ENCODE measurements at regions of chr21 and their contacts with region 1.

Region 1: DNA sequence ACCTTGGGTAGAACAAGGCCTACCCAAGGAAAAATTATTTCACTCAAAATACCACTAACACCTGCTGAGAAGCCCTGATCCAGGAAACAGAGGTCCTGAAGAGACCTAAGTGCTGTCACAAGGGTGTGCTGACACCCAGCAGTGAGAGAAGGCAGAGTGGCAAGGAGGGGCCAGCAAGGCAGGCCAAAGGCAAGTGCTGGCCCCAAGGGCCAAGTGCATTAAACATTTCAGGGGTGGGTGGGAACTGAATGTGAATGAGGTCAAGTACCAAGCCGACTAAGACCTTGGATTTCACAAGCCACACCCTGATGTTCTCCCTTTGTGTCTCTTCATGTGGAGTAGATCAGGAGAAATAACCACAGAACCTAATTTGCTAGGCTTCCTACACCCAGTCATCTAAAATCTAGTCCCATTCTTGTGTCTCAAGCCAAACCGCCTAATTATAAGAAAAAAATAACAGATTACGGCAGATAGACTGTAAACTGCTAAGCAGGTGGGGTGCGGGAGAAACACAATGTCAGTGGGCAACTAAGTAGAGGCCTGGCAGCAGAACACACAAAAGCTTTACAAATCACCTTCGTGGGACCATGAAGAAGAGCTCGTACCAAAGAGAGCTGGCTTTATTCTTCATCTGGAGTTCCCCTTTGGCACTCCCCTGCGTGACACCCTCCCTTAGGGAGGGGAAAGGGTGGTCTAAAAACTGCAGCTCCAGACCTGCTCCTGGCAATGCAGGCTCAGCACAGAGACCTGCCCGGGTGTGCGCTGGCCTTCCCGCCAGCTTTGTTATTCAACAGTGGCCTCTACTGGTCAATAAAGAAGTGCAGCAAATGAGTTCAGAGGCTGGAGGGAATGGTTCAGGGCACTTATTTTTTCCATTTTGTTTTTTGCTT is 8.7 kb downstream of the UBE2G2 start:
- DNase-seq: peak; percentile 56
- ATAC-seq: peak; percentile 98
- H3K4me3 Mint-ChIP-seq: no peak overlapping the region
- H3K27ac Mint-ChIP-seq: peak overlapping the region; percentile 48
- H3K4me1 Mint-ChIP-seq: peaks cover 67% of the 10 kb centered on the region
- H3K27me3 Mint-ChIP-seq: no peaks in the 10 kb centered on the region
- CTCF ChIP-seq: peak; percentile 80

Region 2: GRCh38 chr21:44653656-44654575 is 139.0 kb before region 1 on chr21:
- CTCF ChIA-PET with region 1: no interaction called
- POLR2A ChIA-PET with region 1: no interaction called
- intact Hi-C with region 1: no loop called
- DNase-seq: peak; percentile 54
- ATAC-seq: no peak
- H3K4me3 Mint-ChIP-seq: no peak overlapping the region
- H3K27ac Mint-ChIP-seq: peak overlapping the region; percentile 58
- H3K4me1 Mint-ChIP-seq: peaks cover 49% of the 10 kb centered on the region
- H3K27me3 Mint-ChIP-seq: no peaks in the 10 kb centered on the region
- CTCF ChIP-seq: no peak

Region 3: GRCh38 chr21:44780767-44781459 is 12.0 kb before region 1 on chr21:
- CTCF ChIA-PET with region 1: interaction called, 35 read pairs
- POLR2A ChIA-PET with region 1: no interaction called
- intact Hi-C with region 1: no loop called
- DNase-seq: no peak
- ATAC-seq: no peak
- H3K4me3 Mint-ChIP-seq: no peak overlapping the region
- H3K27ac Mint-ChIP-seq: no peak overlapping the region
- H3K4me1 Mint-ChIP-seq: peaks cover 33% of the 10 kb centered on the region
- H3K27me3 Mint-ChIP-seq: no peaks in the 10 kb centered on the region
- CTCF ChIP-seq: no peak

Region 4: DNA sequence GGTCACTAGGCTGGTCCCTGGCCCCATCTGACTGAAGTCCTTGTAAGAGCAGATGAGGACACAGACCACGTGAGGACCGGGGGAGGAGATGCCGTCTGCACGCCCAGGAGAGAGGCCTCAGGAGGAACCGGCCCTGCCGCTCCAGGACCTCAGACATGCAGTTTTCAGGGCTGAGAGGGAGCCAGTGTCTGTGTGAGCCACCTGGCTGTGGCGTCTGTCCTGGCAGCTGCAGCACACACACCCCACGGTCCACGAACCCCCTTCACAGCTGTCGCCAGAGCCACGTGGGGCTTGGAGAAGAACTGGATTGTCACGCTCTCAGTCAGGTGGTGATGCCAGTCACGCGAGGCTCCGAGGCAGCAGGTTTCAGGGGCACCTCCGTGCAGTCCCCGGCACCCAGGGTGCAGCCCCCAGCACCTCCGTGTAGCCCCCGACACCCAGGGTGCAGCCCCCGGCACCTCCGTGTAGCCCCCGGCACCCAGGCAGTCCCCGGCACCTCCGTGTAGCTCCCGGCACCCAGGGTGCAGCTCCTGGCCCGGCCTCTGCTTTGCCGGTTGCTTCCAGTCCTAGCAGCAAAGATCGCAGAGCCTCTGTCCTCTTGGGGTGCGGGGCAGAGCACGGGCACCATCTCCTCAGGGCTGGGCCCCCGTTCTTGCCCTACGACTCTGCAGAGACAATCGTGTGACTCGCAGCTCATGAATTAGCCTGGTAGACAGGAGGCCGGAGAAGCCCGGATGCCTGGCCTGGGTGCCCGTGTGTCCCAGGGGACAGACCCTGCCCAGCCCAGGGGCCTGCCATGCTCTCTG is 43.9 kb after region 1 on chr21:
- CTCF ChIA-PET with region 1: no interaction called
- POLR2A ChIA-PET with region 1: no interaction called
- intact Hi-C with region 1: no loop called
- DNase-seq: no peak
- ATAC-seq: no peak
- H3K4me3 Mint-ChIP-seq: no peak overlapping the region
- H3K27ac Mint-ChIP-seq: no peak overlapping the region
- H3K4me1 Mint-ChIP-seq: no peaks in the 10 kb centered on the region
- H3K27me3 Mint-ChIP-seq: no peaks in the 10 kb centered on the region
- CTCF ChIP-seq: no peak

Region 5: DNA sequence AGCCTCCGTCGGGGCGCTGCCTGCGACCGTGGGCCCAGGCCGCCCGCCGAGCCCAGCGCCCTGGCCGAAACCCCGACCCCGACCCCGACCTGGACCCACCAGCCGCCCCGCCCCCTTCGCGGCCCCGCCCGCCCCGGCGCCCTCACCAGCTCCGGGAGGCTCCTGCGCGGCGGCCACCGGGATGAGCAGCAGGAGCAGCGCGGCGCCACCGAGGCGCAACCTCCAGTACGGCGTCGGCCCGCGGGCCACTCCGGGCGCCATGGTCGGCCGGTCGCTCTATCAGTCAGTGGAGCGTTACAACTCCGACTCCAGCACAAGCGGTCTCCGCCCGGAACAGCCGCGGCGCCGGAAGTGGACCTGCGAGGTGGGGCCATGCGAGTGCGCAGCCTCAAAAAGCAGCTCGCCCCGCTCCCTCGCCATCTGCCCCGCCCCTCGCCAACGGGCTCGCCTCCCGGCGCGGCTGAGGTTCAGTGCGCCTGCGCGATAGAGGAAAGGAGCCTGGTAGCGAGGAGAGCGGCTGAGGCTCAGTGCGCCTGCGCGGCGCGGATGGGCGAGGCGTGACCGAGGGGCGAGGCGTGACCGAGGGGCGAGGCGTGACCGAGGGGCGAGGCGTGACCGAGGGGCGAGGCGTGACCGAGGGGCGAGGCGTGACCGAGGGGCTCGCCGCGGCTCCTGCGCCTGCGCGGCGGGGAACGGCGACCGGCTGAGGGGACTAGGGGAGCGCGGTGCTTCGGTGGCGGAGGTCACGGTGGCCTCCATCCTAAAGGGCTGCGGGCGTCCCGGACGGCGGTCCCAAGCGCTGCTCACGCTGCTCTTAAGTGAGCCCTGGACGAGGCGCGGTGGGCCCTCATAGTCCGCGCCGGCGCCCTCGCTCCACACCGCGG is 80.7 kb after region 1 on chr21 and contains the start of gene PTTG1IP:
- CTCF ChIA-PET with region 1: interaction called, 10 read pairs
- POLR2A ChIA-PET with region 1: no interaction called
- intact Hi-C with region 1: no loop called
- DNase-seq: peak; percentile 99
- ATAC-seq: peak; percentile 89
- H3K4me3 Mint-ChIP-seq: peak within 1 kb of the TSS; percentile 84
- H3K27ac Mint-ChIP-seq: peak within 1 kb of the TSS; percentile 83
- H3K4me1 Mint-ChIP-seq: peaks cover 40% of the 10 kb centered on the region
- H3K27me3 Mint-ChIP-seq: no peaks in the 10 kb centered on the region
- CTCF ChIP-seq: no peak
- total RNA-seq, gene PTTG1IP: 60.7 to 61.8 TPM

Region 6: DNA sequence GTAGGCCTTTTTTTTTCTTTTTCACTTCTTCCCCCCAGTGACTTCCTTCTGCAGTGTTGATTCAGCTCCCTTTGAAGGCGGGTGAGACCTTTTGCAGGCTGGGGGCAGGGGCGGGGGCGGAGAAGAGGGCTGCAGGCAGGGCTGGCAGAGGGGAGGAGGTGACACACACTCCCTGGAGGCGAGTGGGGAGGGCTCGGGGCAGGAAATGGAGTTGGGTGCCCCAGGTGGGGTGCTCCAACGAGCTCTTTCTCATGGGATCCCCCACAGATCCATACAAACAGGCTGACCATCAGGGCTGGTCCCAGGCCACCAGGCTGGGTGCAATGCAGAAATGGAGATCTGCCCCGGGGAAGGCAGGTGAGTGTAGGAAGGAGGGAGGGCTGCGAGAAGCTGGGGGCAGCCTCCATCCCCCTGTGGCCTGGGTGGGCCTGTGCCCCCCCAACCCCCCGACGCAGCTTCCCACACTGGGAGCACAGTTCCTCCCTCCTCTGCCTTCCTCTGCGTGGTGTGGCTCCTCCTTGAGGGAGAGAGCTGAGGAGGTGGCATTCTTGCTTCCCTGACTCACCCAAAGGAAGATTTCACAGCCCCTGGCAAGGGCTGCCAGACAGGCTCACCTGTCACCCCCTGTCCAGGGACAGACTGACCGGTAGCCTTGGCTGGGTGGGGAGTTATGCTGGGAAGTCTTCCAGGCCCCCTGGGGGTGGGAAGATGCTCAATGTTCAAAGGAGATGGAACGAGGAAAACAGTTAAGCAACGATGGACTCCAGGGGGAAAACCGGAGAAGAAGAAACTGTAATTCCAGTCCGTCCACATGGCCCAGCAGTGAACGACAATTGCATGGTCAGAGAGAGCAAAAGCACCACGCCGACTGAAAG is 134.9 kb after region 1 on chr21:
- CTCF ChIA-PET with region 1: interaction called, 10 read pairs
- POLR2A ChIA-PET with region 1: no interaction called
- intact Hi-C with region 1: no loop called
- DNase-seq: peak; percentile 98
- ATAC-seq: peak; percentile 75
- H3K4me3 Mint-ChIP-seq: peak overlapping the region; percentile 78
- H3K27ac Mint-ChIP-seq: peak overlapping the region; percentile 96
- H3K4me1 Mint-ChIP-seq: peaks cover 77% of the 10 kb centered on the region
- H3K27me3 Mint-ChIP-seq: no peaks in the 10 kb centered on the region
- CTCF ChIP-seq: no peak

Region 7: DNA sequence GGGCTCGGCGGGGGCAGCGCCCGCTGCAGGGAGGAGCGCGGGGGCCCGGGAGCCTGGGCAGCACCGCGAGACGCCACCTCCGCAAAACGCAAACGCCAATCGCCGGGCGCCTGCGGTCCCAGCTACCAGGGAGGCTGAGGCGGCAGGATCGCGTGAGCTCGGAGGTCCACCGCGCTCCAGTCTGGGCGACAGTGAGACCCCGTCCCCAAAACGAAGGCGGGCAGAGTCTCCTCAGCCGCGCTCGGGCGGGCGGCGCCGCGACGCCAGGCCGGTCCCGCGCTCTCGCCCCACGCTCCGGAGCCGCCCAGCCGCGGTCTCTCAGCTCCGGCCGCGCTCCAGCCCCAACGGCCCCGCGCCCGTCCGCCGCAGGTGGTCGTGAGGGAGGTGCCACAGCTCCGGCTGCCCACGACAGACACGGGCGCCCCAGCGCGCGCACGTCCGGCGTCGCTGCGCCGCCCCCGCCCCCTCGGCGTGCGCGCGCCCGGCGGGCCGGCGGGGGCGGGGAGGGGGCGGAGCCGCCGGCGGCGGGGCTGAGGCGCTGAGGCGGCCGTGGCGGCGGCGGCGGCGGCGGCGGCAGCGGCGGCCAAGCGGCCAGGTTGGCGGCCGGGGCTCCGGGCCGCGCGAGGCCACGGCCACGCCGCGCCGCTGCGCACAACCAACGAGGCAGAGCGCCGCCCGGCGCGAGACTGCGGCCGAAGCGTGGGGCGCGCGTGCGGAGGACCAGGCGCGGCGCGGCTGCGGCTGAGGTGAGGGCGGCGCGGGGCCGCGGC is 281.3 kb after region 1 on chr21 and contains the start of gene ADARB1:
- CTCF ChIA-PET with region 1: no interaction called
- POLR2A ChIA-PET with region 1: no interaction called
- intact Hi-C with region 1: no loop called
- DNase-seq: peak; percentile 56
- ATAC-seq: peak; percentile 40
- H3K4me3 Mint-ChIP-seq: peak within 1 kb of the TSS; percentile 87
- H3K27ac Mint-ChIP-seq: peak within 1 kb of the TSS; percentile 87
- H3K4me1 Mint-ChIP-seq: peaks cover 39% of the 10 kb centered on the region
- H3K27me3 Mint-ChIP-seq: no peaks in the 10 kb centered on the region
- CTCF ChIP-seq: no peak
- total RNA-seq, gene ADARB1: 36.2 to 37.1 TPM